Upper lobe of right lung (tissue), 1 donor: ENCODE measurements at regions of chrX and their contacts with region 1.

Region 1: DNA sequence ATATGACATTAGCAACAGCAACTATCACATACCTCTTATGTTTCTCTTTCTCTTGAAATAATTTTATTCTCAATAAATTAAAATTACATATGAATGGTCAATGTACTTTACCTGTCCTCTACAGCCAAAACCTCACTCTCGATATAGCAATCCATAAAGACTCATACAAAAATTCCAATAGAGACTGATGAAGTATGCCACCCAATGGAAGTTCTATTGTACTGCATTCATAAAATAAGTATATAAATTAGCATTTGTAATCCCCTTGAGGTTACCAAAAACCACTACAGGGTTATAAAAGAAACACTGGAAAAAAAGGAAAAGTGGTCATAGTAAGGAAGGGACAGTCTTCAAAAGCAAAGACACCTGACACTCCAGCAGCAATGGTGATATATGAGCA is 32.8 kb downstream of the CLDN2 start:
- DNase-seq: no peak
- ATAC-seq: no peak
- H3K4me3 ChIP-seq: no peak overlapping the region
- H3K27ac ChIP-seq: no peak overlapping the region
- H3K4me1 ChIP-seq: no peaks in the 10 kb centered on the region
- H3K27me3 ChIP-seq: no peaks in the 10 kb centered on the region
- CTCF ChIP-seq: peak; percentile 42

Region 2: GRCh38 chrX:106415276-106415895 is 537.6 kb before region 1 on chrX:
- intact Hi-C with region 1: no loop called
- DNase-seq: no peak
- ATAC-seq: peak; percentile 40
- H3K4me3 ChIP-seq: no peak overlapping the region
- H3K27ac ChIP-seq: no peak overlapping the region
- H3K4me1 ChIP-seq: no peaks in the 10 kb centered on the region
- H3K27me3 ChIP-seq: no peaks in the 10 kb centered on the region
- CTCF ChIP-seq: peak; percentile 50

Region 3: DNA sequence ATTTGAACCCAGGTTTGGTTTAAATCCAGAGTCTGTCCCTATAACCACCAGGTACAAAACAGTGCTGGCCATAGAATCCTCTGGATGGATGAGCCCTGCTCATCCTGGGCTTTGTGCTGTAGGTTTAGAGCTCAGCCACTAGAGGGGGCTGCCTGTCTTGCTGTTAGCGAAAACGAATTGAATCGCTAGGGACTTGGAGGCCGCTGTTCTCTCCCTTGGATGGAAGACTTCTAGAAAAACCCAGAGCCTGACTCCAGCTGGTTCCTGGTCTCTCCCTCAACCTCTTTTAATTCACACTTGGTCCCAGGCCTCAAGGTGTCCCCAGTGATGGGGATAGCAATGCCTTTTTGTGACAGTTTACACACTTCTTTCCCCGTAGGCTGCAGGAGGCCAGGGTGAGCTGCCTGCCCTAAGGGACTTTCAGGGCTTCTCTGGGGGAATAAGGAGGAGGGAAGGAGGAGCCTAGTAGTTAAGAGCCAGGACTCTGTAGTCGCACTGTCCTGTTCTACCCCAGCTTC is 58.5 kb before region 1 on chrX:
- intact Hi-C with region 1: loop called (anchors 10 kb)
- DNase-seq: no peak
- ATAC-seq: peak; percentile 89
- H3K4me3 ChIP-seq: no peak overlapping the region
- H3K27ac ChIP-seq: no peak overlapping the region
- H3K4me1 ChIP-seq: no peaks in the 10 kb centered on the region
- H3K27me3 ChIP-seq: no peaks in the 10 kb centered on the region
- CTCF ChIP-seq: peak; percentile 65